ENCODE measurements at regions of chr6 and their contacts with region 1.

Region 1: GRCh38 chr6:138817822-138818308 is 22.0 kb downstream of the ECT2L start:
- DNase-seq: no peak
- H3K4me3 ChIP-seq: no peak overlapping the region
- H3K27ac ChIP-seq: no peak overlapping the region
- H3K4me1 ChIP-seq: peaks cover 0 to 21% (median 4%) of the 10 kb centered on the region in 6 donors
- H3K27me3 ChIP-seq: no peaks in the 10 kb centered on the region
- CTCF ChIP-seq: no peak
- POLR2A ChIP-seq: no peak

Region 2: DNA sequence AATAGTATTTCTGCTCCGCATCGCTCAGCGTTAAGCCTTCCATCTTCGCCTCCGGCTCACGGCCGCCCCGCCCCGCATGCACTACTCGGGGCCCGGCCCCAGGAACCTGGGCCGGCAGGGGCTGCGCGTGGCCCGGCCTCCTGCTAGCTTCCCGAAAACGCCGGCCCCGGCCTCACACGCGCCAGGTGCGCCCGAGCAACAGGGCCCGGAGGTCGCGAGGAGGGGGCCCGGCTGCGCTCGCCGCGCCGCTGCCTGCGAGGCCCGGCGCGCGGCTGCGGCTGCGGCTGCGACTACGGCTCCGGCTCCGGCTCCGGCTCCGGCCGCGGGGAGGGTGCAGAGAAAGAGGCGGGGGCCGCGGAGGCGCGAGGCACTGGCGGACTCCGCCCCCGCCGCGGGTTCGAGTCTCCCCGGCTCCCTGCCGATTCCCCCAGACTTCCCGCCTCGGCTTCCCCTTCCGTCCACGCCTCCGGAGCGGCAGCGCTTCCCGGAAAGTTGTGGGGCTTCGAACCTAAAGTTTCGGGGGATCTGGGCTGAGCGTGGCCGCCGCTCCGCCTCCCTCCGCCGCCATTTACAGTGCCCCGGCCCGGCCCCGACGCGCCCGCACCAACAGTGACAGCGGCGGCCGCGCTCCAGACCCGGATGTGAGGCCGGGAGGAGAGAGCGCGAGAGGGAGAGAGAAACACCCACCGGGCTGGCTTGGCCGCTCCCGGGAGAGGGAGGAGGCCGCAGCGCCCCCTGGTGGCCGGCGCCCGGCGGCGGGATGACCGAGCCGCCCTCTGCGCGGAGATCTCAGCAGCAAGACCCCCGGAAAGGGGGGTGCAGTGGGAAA is 170.0 kb after region 1 on chr6 and contains the start of gene REPS1:
- intact Hi-C with region 1: loop called (anchors 5 kb)
- DNase-seq: peak; percentile 98
- H3K4me3 ChIP-seq: peak within 1 kb of the TSS; percentile 66 to 88 (median 76)
- H3K27ac ChIP-seq: peak within 1 kb of the TSS; percentile 86 to 96 (median 92)
- H3K4me1 ChIP-seq: peaks cover 23 to 58% (median 51%) of the 10 kb centered on the region in 6 donors
- H3K27me3 ChIP-seq: no peaks in the 10 kb centered on the region
- CTCF ChIP-seq: peak; percentile 76 to 99 (median 96)
- POLR2A ChIP-seq: no peak
- total RNA-seq, gene REPS1: 41.2 to 75.7 (median 61.6) TPM